Activated B cell treated with CpG ODN at 0.5 μM for 24 hours (primary cell): ENCODE measurements at regions of chr6 and their contacts with region 1.

Region 1: DNA sequence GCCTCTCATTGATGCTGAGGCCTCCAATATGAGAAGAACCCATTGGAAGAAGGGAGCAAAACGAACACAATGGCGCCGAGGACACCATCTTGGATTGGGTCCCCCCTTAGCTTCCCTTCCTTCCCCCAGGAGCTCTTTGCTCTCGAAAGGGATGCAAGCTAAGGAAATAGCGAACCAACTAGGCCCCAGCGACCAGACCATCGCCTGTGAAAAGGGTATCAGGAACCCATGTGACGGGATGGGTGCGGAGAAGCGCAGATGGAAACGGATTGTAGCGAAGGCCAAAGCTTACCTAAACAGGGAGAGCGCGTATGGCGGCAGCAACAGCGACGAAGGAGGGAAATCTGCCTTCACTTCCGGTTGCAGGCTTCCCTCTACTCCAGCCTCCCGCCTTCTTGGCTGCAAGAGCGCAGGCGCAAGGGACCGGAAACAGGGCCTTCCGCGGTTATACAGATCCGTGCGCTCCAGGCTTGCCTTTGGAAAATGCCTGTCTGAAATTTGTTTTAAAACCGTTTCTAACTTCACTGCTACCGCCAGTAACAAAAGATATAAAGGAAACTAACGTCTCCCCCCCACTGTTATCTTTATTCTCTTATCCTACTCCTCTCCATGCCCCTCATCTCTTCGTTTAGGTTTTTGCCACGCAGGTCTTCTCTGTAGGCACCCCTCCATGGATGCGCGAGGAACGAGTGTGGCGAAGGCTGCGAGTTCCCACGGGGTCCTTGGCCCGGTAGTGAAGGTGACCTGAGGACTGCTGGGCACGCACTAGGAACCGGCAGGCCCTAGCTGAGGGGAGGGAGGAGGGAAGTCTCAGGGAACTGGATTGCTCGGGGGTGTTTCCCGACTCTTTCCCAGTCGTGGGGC is at the start of gene DDX39B:
- DNase-seq: peak; percentile 80
- ATAC-seq: peak; percentile 77
- H3K4me3 Mint-ChIP-seq: peak within 1 kb of the TSS; percentile 98
- H3K27ac Mint-ChIP-seq: peak within 1 kb of the TSS; percentile 97
- H3K4me1 Mint-ChIP-seq: peaks cover 58% of the 10 kb centered on the region
- H3K27me3 Mint-ChIP-seq: no peaks in the 10 kb centered on the region
- CTCF ChIP-seq: no peak
- total RNA-seq, gene DDX39B: 431 and 484 TPM in 2 replicates

Region 2: DNA sequence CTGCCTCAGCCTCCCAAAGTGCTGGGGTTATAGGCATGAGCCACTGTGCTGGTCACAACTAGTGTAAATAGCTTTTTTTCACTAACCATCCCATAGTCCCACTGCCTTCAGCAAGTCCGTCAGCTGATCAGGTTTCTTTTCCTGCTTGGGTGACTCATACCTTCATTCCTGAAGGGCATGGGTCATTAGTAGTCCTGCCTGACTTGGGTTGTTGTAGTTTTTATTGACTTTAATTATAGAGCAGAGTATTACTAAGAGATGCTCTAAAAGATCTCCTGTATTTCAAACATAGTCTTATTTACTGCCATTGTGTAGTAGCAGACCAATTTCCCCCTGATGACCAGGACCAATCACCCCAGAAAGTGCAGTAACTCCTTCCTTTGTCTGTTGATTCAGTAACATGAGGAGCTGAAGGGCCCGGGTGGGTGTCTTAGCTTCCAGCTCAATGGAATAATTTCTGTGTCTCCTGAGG is 295.8 kb before region 1 on chr6:
- CTCF ChIA-PET with region 1: no interaction called
- POLR2A ChIA-PET with region 1: no interaction called
- intact Hi-C with region 1: no loop called
- DNase-seq: no peak
- ATAC-seq: no peak
- H3K4me3 Mint-ChIP-seq: no peak overlapping the region
- H3K27ac Mint-ChIP-seq: no peak overlapping the region
- H3K4me1 Mint-ChIP-seq: no peaks in the 10 kb centered on the region
- H3K27me3 Mint-ChIP-seq: peaks cover 33% of the 10 kb centered on the region
- CTCF ChIP-seq: no peak

Region 3: DNA sequence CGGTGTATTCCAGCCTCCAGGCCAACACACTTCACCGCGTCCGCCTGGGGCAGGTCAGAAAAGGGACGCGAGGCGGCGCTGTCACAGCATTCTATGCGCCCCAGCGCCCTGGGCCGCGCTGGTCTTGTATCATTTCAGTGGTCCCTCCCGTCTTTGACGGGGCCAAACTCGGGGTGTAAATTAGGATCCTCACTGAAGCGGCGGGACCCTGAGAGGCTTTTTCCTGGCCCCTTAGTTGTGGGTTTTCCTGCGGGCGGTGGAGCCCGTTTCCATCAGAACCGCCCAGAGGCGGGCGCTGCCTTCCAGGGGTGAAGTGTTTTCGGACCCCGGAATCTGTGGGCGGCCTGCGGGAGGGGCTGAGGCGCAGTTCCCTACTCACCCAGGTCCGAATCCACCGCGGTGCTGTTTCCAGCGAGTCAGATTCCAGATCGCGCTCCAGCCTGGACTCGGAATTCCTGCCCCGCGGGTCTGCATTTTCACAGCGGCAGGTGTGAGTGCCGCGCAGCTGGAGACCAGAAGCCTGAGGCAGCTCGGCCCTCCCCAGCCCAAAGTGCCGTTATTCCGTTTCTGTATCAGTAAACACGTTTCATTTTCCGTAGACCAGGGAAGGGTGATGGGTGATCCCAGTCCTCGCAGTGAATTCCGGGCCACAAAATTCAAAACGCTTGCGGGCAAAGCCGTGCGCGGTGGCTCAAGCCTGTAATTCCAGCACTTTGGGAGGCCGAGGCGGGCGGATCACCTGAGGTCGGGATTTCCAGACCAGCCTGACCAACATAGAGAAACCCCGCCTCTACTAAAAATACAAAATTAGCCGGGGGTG is 47.8 kb before region 1 on chr6:
- CTCF ChIA-PET with region 1: interaction called, 15 read pairs
- POLR2A ChIA-PET with region 1: interaction called, 46 read pairs
- intact Hi-C with region 1: loop called (anchors 1 kb)
- DNase-seq: peak; percentile 76
- ATAC-seq: peak; percentile 48
- H3K4me3 Mint-ChIP-seq: peak overlapping the region; percentile 90
- H3K27ac Mint-ChIP-seq: peak overlapping the region; percentile 92
- H3K4me1 Mint-ChIP-seq: peaks cover 54% of the 10 kb centered on the region
- H3K27me3 Mint-ChIP-seq: no peaks in the 10 kb centered on the region
- CTCF ChIP-seq: no peak

Region 4: DNA sequence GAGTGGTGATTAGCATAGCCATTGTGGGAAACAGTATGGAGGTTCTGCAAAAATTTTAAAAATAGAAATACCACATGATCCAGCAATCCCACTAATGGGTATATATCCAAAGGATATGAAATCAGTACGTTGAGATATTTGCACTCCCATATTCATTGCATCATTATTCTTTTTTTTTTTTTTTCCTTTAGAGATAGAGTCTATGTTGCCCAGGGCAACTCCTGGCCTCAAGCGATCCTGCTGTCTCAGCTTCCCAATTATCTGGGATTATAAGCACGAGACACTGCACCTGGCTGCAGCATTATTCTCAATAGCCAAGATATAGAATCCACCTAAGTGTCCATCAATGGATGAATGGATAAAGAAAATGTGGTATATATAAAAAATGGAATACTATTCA is 20.1 kb before region 1 on chr6:
- CTCF ChIA-PET with region 1: no interaction called
- POLR2A ChIA-PET with region 1: no interaction called
- intact Hi-C with region 1: no loop called
- DNase-seq: no peak
- ATAC-seq: no peak
- H3K4me3 Mint-ChIP-seq: no peak overlapping the region
- H3K27ac Mint-ChIP-seq: no peak overlapping the region
- H3K4me1 Mint-ChIP-seq: no peaks in the 10 kb centered on the region
- H3K27me3 Mint-ChIP-seq: peaks cover 4% of the 10 kb centered on the region
- CTCF ChIP-seq: no peak

Region 5: DNA sequence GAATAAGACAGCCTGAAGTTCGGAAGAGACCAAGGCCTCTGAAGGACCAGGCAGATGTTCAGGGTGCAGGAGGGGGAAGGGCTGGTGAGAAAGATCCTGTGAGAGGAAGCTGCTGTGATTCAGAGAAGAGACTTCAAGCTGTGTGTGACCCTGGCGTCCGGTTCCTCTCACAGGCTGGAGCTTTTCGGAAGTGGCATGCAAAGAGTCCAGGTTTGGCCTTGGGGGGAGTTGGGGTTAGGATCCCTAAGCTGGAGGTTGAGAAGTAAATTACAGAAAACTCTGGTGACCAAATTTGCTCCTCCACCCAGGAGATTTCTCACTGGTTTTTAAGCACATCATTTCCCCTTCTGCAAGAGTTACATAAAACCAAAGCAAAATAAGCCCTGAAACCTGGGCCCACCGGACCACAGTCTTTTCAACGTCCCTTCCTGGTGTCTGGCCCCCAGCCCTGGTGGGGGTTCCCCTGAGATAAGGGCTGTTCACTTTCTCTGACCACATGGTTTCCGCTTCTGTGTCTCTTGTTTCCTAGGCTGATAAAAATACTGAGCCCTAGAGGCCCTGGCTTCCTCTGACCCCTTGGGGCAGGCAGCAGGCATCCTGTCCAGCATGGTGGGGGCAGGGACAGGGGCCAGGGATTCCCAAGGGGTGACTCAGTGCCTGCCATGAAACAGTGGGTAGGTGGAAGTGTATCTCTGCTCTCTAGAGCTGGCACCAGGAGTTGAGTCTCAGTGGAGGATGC is 18.2 kb after region 1 on chr6:
- CTCF ChIA-PET with region 1: no interaction called
- POLR2A ChIA-PET with region 1: interaction called, 19 read pairs
- intact Hi-C with region 1: loop called (anchors 1 kb)
- DNase-seq: peak; percentile 52
- ATAC-seq: peak; percentile 67
- H3K4me3 Mint-ChIP-seq: peak overlapping the region; percentile 83
- H3K27ac Mint-ChIP-seq: peak overlapping the region; percentile 94
- H3K4me1 Mint-ChIP-seq: peaks cover 90% of the 10 kb centered on the region
- H3K27me3 Mint-ChIP-seq: no peaks in the 10 kb centered on the region
- CTCF ChIP-seq: no peak

Region 6: DNA sequence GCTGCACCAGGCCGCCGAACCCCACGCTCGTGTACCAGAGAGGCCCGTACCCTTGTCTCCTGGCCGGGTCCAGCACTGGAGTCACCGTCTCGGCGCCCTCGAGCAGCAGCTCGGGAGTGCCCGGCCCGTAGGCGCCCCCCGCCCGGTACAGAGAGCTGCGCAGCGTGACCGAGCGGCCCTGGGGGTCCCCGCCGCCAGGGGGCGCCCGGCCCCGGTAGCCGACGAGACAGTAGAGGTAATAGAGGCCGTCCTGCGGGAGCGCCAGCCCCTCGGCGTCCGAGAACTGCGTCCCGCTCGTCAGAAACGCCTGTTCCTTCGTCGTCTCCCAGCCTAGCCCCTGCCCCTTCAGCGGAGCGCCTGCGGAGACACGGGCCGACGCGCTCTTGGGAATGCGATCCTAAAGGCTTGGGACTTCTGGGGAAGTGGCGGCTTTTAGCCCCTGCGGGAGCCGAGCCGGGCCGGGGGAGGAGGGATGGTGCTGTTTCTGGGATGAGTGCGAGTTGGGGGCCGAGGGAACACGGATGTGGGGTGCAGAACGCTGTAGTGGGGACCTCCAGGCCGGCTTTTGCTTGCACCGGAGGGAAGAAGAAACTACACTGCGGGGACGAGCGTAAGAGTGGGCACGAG is 39.0 kb after region 1 on chr6:
- CTCF ChIA-PET with region 1: interaction called, 611 read pairs
- POLR2A ChIA-PET with region 1: interaction called, 44 read pairs
- intact Hi-C with region 1: loop called (anchors 1 kb)
- DNase-seq: peak; percentile 94
- ATAC-seq: peak; percentile 71
- H3K4me3 Mint-ChIP-seq: peak overlapping the region; percentile 99
- H3K27ac Mint-ChIP-seq: peak overlapping the region; percentile 94
- H3K4me1 Mint-ChIP-seq: peaks cover 83% of the 10 kb centered on the region
- H3K27me3 Mint-ChIP-seq: no peaks in the 10 kb centered on the region
- CTCF ChIP-seq: peak; percentile 91

Region 7: DNA sequence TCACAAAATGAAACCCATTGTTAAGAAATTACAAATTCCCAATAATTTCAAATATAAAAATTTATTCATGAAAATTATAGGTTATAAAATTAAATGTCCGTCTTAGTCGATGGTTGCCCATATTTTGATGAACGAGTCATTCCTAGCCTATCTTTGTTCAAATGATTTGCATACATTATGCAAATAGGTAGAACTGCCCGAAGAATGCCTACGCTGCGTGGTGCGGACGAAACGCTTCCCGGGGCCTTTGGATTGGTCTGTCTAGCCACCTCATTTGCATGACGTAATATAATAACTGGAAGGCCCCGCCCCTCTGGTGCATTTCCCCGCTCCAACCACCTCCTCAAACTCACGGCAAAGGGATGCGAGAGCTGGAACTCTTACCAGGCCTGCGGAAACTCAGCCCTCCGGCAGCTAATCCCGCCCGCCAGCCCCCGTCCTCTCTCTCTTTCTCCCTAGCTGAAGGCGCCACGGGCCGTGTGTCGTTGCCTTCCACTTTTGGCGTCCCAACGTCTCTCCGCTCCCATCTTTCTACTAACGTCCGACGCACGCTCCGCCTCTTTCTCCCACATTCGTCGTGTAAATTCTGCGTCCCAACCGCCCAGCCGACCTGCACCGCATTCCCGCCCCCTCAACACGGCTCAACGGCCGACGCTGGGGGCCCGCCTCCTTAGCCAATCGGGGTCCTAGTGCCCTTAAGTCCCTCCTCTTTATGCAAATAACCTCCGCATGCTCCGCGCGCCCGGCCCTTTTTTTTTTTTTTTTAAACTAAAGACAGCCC is 78.1 kb after region 1 on chr6:
- CTCF ChIA-PET with region 1: interaction called, 3 read pairs
- POLR2A ChIA-PET with region 1: interaction called, 20 read pairs
- intact Hi-C with region 1: loop called (anchors 1 kb)
- DNase-seq: peak; percentile 87
- ATAC-seq: peak; percentile 84
- H3K4me3 Mint-ChIP-seq: peak overlapping the region; percentile 86
- H3K27ac Mint-ChIP-seq: peak overlapping the region; percentile 94
- H3K4me1 Mint-ChIP-seq: peaks cover 46% of the 10 kb centered on the region
- H3K27me3 Mint-ChIP-seq: no peaks in the 10 kb centered on the region
- CTCF ChIP-seq: no peak

Region 8: DNA sequence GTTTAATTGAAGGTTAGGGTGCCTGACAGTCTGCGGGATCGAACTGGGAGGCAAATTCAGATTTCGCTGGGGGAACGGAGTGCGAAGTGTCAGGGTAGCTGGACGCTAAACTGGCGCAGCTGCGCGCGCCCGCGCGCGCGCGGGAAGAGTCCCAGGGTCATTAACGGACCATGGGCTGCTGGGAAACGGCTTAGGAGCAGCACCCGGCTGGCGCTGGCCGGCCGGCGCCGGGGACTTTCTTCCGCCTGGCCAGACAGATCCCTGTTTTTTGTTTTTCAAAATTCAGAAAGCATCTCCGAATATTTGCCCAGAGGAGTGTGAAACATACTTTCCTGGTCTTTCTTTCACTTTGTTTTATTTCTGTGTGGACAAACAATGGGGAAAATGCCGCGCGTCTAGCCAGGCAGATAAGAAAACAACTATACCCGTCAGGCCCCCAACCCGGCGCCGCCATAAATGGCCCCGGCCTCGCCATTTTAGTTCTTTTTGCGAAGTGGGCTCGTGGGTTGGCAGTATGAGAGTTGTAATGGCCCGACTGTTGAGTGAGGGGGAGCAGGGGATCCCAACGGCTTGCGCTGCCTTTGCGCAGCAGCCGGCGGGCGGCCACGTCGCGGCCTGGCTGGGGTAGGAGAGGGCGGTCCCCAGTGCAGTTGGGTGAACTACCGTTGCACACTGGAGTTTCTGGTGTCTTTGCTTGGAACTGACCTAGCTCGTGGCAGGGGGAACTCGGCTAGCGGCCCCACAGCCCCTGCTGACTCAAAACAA is 292.7 kb after region 1 on chr6:
- CTCF ChIA-PET with region 1: interaction called, 3 read pairs
- POLR2A ChIA-PET with region 1: interaction called, 20 read pairs
- intact Hi-C with region 1: loop called (anchors 1 kb)
- DNase-seq: peak; percentile 75
- ATAC-seq: peak; percentile 62
- H3K4me3 Mint-ChIP-seq: peak overlapping the region; percentile 99
- H3K27ac Mint-ChIP-seq: peak overlapping the region; percentile 98
- H3K4me1 Mint-ChIP-seq: peaks cover 71% of the 10 kb centered on the region
- H3K27me3 Mint-ChIP-seq: no peaks in the 10 kb centered on the region
- CTCF ChIP-seq: no peak